Activated T-helper 2 cell treated with anti-CD3 and anti-CD28 coated beads, Interferon-gamma antibody, Interleukin-2, Interleukin-4, amounts not matched to agents 10 μg/mL and 5 μg/mL and 100 μg/mL, durations not matched to agents 14 hours and 24 hours and 36 hours (primary cell): ENCODE measurements at regions of chr19 and their contacts with region 1.

Region 1: GRCh38 chr19:32798201-32798600 is 71.4 kb downstream of the SLC7A9 start:
- DNase-seq: no peak
- H3K4me3 Mint-ChIP-seq: no peak overlapping the region
- H3K27ac Mint-ChIP-seq: no peak overlapping the region
- H3K4me1 Mint-ChIP-seq: peaks cover 8% of the 10 kb centered on the region
- H3K27me3 Mint-ChIP-seq: no peaks in the 10 kb centered on the region

Region 2: DNA sequence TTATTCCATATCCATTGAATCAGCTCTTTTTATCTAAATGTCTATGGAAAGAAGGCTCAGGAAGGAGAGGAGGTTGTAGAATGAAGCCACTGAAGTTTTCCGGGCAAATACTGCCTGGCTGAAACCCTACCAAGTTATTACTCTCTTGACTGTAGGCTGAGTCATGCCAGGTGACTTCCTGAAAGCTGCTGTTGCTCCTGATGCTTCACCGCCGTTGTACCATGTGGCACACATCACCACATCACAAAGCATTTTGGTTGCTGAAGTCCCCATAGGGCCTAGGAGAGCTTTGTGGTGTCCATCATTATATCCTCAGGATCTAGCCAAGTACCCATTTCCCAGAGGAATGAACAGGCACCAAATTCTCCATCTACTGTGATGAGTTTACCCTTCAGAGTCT is 89.7 kb before region 1 on chr19:
- intact Hi-C with region 1: loop called (anchors 10 kb)
- DNase-seq: no peak
- H3K4me3 Mint-ChIP-seq: no peak overlapping the region
- H3K27ac Mint-ChIP-seq: peak overlapping the region; percentile 42
- H3K4me1 Mint-ChIP-seq: peaks cover 14% of the 10 kb centered on the region
- H3K27me3 Mint-ChIP-seq: no peaks in the 10 kb centered on the region

Region 3: DNA sequence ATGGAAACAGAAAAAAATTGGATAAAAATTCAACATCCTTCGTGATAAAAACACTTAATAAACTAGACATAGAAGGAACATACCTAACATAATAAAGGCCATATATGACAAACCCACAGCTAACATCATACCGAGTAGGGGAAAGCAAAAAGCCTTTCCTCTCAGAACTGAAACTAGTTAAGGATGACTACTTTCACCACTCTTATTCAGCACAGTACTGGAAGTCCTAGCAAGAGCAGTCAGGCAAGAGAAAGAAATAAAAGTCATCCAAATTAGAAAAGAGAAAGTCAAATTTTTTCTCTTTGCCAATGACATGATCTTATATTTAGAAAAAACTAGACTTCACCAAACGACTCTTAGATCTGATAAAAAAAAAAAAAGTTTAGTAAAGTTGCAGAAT is 97.2 kb after region 1 on chr19:
- intact Hi-C with region 1: no loop called
- DNase-seq: no peak
- H3K4me3 Mint-ChIP-seq: no peak overlapping the region
- H3K27ac Mint-ChIP-seq: no peak overlapping the region
- H3K4me1 Mint-ChIP-seq: peaks cover 9% of the 10 kb centered on the region
- H3K27me3 Mint-ChIP-seq: no peaks in the 10 kb centered on the region